ENCODE measurements at regions of chr15 and their contacts with region 1.

Region 1: DNA sequence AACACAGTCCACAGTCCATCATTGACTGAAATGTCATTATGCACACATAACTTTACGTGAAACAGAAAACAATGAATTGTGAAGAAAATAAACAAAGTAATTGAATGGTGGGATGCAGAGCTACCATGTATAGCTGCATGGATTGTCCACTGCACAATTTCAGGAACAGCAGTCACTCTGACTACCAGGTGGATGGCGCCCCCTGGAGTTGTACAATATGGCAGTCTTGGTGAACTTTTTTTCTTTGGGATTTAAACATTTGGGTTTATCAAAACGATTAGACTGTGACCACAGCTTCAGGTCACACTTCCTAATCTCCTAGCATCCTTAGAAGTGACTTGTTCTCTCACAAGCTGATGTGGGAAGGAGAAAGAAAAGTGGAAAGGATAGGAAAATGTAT is 48.9 kb upstream of the TCF12 start:
- DNase-seq: peak in 3 of 5 donors; percentile 31 to 41 (median 34)
- ATAC-seq: no peak
- H3K4me3 ChIP-seq: no peak overlapping the region
- H3K27ac ChIP-seq: no peak overlapping the region
- H3K4me1 ChIP-seq: peaks cover 0 to 11% (median 0%) of the 10 kb centered on the region in 12 donors
- H3K27me3 ChIP-seq: no peaks in the 10 kb centered on the region
- CTCF ChIP-seq: peak; percentile 33 to 69 (median 61)
- POLR2A ChIP-seq: no peak

Region 2: GRCh38 chr15:56496635-56497034 is 372.9 kb before region 1 on chr15:
- intact Hi-C with region 1: loop called in 8 of 10 experiments (anchors 1 to 10 kb)
- DNase-seq: no peak
- ATAC-seq: peak in 3 of 4 donors; percentile 73 to 89 (median 88)
- H3K4me3 ChIP-seq: no peak overlapping the region
- H3K27ac ChIP-seq: no peak overlapping the region
- H3K4me1 ChIP-seq: no peaks in the 10 kb centered on the region
- H3K27me3 ChIP-seq: no peaks in the 10 kb centered on the region
- CTCF ChIP-seq: peak; percentile 54 to 85 (median 72)
- POLR2A ChIP-seq: no peak